Heart right ventricle (tissue), 16 donors: ENCODE measurements at regions of chr1 and their contacts with region 1.

Region 1: GRCh38 chr1:110312188-110313121 is 26.7 kb upstream of the RBM15 start:
- DNase-seq: peak; percentile 79 to 83
- ATAC-seq: peak; percentile 93 to 96 (median 96)
- H3K4me3 ChIP-seq: no peak overlapping the region
- H3K27ac ChIP-seq: no peak overlapping the region
- H3K4me1 ChIP-seq: peaks cover 3 to 52% (median 31%) of the 10 kb centered on the region in 9 donors
- H3K27me3 ChIP-seq: no peaks in the 10 kb centered on the region
- CTCF ChIP-seq: peak; percentile 91 to 98 (median 96)

Region 2: DNA sequence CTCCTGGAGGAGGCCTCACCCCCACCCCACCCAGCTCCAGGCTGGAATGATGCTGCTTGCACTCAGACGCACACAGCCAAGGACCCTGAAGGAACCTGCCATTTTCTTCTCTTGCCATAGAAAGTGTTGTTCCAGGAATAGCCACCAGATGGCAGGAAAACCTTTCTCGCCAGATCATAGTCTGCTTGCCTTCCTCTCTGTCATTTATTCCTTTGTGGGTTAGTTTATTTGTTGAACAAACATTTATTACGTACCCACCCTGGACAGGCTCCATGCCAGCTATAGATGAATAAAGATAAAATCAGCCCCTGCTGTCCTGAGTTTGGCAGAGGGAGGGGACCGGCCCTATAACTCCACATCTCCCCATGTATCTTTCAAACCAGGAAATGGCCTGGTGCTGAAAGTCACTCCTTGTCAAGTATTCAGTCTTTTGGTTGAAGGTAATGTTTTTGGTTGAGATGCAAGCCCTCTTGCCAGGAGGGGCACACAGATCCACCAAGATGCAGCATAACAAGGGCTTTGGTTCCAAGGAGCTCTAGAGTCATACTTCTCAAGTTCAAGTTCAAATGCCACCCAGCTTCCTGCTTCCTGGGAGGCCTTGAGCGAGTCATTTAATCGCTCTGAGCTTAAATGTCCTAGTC is 109.3 kb before region 1 on chr1:
- intact Hi-C with region 1: loop called (anchors 1 to 5 kb)
- DNase-seq: peak in 1 of 2 donors; percentile 67
- ATAC-seq: peak in 7 of 8 donors; percentile 31 to 73 (median 42)
- H3K4me3 ChIP-seq: no peak overlapping the region
- H3K27ac ChIP-seq: no peak overlapping the region
- H3K4me1 ChIP-seq: peaks cover 0 to 9% (median 4%) of the 10 kb centered on the region in 9 donors
- H3K27me3 ChIP-seq: no peaks in the 10 kb centered on the region
- CTCF ChIP-seq: peak; percentile 81 to 92 (median 89)

Region 3: GRCh38 chr1:110455151-110455550 is 142.7 kb after region 1 on chr1:
- intact Hi-C with region 1: loop called in 9 of 10 experiments (anchors 5 to 10 kb)
- DNase-seq: no peak
- ATAC-seq: no peak
- H3K4me3 ChIP-seq: no peak overlapping the region
- H3K27ac ChIP-seq: no peak overlapping the region
- H3K4me1 ChIP-seq: no peaks in the 10 kb centered on the region
- H3K27me3 ChIP-seq: peaks cover 0 to 30% (median 12%) of the 10 kb centered on the region in 7 donors
- CTCF ChIP-seq: no peak

Region 4: GRCh38 chr1:110460253-110461220 is 148.1 kb after region 1 on chr1:
- intact Hi-C with region 1: loop called (anchors 5 to 10 kb)
- DNase-seq: peak; percentile 45 to 76
- ATAC-seq: peak; percentile 76 to 85 (median 81)
- H3K4me3 ChIP-seq: no peak overlapping the region
- H3K27ac ChIP-seq: no peak overlapping the region
- H3K4me1 ChIP-seq: no peaks in the 10 kb centered on the region
- H3K27me3 ChIP-seq: no peaks in the 10 kb centered on the region
- CTCF ChIP-seq: peak; percentile 78 to 98 (median 95)

Region 5: DNA sequence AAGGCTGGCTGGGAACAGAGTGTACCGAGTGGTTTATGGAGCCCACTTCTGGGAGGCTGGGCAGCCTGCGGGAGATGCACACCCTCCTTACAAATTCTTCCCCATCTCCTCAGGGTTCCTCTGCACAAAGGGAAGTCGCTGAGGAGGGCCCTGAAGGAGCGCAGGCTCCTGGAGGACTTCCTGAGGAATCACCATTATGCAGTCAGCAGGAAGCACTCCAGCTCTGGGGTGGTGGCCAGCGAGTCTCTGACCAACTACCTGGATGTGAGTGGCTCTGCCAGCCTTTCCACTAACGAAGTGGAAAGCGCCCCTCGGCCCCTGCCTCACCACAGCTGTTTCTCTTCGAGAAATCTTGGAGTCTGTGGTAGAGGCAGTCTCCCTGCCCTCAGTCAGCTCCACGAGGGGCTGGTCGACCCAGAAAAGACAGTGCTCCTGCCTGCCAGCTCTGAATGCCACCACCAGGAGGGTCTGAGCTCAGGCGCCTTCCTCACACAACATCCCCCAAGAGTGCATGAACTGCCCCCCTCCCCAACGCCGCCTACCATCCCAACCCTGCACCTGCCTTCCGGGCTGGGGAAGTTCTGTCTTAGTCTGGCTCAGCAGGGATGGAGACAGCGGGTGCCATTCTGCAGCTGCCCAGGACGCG is 170.3 kb after region 1 on chr1:
- intact Hi-C with region 1: loop called in 1 of 10 experiments (anchors 10 kb)
- DNase-seq: no peak
- ATAC-seq: no peak
- H3K4me3 ChIP-seq: no peak overlapping the region
- H3K27ac ChIP-seq: no peak overlapping the region
- H3K4me1 ChIP-seq: peaks cover 0 to 26% (median 10%) of the 10 kb centered on the region in 9 donors
- H3K27me3 ChIP-seq: peaks cover 0 to 12% (median 0%) of the 10 kb centered on the region in 7 donors
- CTCF ChIP-seq: no peak